ENCODE measurements at regions of chr2 and their contacts with region 1.

Region 1: GRCh38 chr2:209239585-209239938 is 184.3 kb upstream of the MAP2 start:
- DNase-seq: no peak
- H3K4me3 ChIP-seq: no peak overlapping the region
- H3K27ac ChIP-seq: no peak overlapping the region
- H3K4me1 ChIP-seq: no peaks in the 10 kb centered on the region
- H3K27me3 ChIP-seq: no peaks in the 10 kb centered on the region
- CTCF ChIP-seq: no peak
- POLR2A ChIP-seq: no peak

Region 2: DNA sequence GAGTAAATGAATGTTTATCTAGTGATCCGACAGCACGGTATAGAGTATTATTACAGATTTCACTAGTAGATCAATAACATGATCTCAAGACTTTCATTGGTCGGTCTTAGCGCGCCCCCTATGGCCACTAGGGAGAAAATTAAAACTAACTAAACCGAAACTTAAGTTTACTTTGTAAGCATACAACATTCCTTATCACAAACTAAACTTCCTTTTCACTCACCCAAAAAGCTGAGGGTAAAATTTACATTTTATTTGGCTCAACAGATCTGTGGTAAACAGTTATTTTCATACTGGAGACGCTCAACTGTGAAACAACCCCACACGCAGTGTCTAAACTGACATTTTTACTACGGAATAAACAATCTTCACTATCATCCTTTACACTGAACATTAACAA is 31.4 kb before region 1 on chr2:
- intact Hi-C with region 1: loop called (anchors 2 kb)
- DNase-seq: no peak
- H3K4me3 ChIP-seq: peak overlapping the region in 1 of 3 donors; percentile 22
- H3K27ac ChIP-seq: no peak overlapping the region
- H3K4me1 ChIP-seq: no peaks in the 10 kb centered on the region
- H3K27me3 ChIP-seq: no peaks in the 10 kb centered on the region
- CTCF ChIP-seq: peak in 2 of 3 donors; percentile 45 to 63
- POLR2A ChIP-seq: no peak

Measured in breast epithelium (tissue), 4 donors.